Ascending aorta (tissue), 2 donors: ENCODE measurements at regions of chr10 and their contacts with region 1.

Region 1: GRCh38 chr10:42638055-42638820 is at the start of gene ZNF33B:
- DNase-seq: peak; percentile 73 to 94
- H3K4me3 ChIP-seq: peak within 1 kb of the TSS; percentile 82 to 86
- H3K27ac ChIP-seq: peak within 1 kb of the TSS; percentile 90 to 91
- H3K4me1 ChIP-seq: no peaks in the 10 kb centered on the region
- H3K27me3 ChIP-seq: no peaks in the 10 kb centered on the region
- CTCF ChIP-seq: no peak
- total RNA-seq, gene ZNF33B: 8.6 TPM

Region 2: DNA sequence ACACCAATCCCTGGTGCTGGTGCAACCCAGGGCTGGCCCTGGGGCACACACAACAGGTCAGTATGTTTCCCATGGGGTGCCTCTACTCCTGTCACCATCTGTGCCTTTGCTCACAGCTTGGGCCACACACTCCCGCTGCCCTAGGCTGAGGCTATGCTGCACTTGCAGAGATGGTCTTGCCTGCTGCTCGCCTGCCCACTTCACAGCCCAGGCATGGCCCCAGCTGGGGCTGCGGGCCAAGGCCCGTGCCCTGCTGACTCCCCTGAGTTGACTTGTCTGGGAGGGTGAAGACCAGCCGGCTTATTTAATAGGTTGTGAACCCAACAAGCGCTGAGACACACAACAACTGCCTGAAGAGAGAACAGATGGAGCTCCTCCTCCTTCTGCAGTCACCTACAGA is 183.9 kb before region 1 on chr10:
- intact Hi-C with region 1: no loop called
- DNase-seq: no peak
- H3K4me3 ChIP-seq: no peak overlapping the region
- H3K27ac ChIP-seq: no peak overlapping the region
- H3K4me1 ChIP-seq: no peaks in the 10 kb centered on the region
- H3K27me3 ChIP-seq: no peaks in the 10 kb centered on the region
- CTCF ChIP-seq: no peak

Region 3: DNA sequence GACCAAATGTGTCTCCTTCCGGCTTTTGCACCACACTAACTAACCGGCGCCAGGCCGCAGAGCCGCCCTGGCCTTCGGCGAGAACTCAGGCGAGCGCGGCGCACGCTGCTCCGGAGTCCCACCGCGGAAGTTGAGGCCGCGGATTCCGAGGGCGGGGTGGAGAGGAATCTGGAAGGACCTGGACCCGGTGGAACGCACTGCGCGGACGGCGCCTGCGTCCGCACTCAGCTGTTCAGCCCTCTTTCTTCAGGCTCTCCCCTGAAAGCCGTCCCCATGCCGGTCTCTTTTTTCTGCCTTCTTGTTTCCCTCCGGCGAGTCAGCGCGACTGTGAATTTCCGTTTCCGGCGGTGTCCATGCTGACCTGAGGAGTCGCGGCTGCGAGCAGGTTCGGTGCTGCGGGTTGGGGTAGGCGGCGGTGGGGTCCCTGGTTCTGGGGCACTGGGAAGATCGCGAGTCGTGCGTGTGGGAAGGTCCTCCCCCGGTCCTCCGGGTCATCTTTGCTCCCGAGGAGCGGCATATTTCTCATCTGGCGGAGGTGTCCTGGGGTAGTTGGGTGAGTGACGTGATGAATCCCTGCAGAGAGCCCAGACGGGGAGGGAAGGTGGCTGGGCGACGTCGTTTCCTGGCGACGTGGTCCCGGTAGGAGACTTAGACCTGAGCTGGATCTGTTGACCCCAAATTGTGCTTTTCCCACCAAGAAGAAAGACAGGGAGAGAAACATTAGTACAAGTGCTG is 144.4 kb after region 1 on chr10 and contains the start of gene BMS1:
- intact Hi-C with region 1: loop called (anchors 5 kb)
- DNase-seq: peak; percentile 46 to 94
- H3K4me3 ChIP-seq: peak within 1 kb of the TSS; percentile 67 to 77
- H3K27ac ChIP-seq: peak within 1 kb of the TSS; percentile 87 to 94
- H3K4me1 ChIP-seq: peaks cover 0 to 14% of the 10 kb centered on the region in 2 donors
- H3K27me3 ChIP-seq: no peaks in the 10 kb centered on the region
- CTCF ChIP-seq: no peak
- total RNA-seq, gene BMS1: 6.2 TPM